ENCODE measurements at regions of chr12 and their contacts with region 1.

Region 1: GRCh38 chr12:108562348-108563135 is at the start of gene ISCU:
- DNase-seq: peak; percentile 98
- H3K4me3 ChIP-seq: peak within 1 kb of the TSS; percentile 82 to 93 (median 84)
- H3K27ac ChIP-seq: peak within 1 kb of the TSS; percentile 93 to 95 (median 95)
- H3K4me1 ChIP-seq: peaks cover 59 to 80% (median 74%) of the 10 kb centered on the region in 4 donors
- H3K27me3 ChIP-seq: no peaks in the 10 kb centered on the region
- CTCF ChIP-seq: peak in 1 of 3 experiments; percentile 6
- EP300 ChIP-seq: no peak
- POLR2A ChIP-seq: peak; percentile 92
- total RNA-seq, gene ISCU: 207 to 257 (median 242) TPM

Region 2: GRCh38 chr12:108618079-108618952 is 55.8 kb after region 1 on chr12:
- intact Hi-C with region 1: loop called (anchors 1 kb)
- DNase-seq: no peak
- H3K4me3 ChIP-seq: no peak overlapping the region
- H3K27ac ChIP-seq: no peak overlapping the region
- H3K4me1 ChIP-seq: peaks cover 11 to 27% (median 14%) of the 10 kb centered on the region in 4 donors
- H3K27me3 ChIP-seq: no peaks in the 10 kb centered on the region
- CTCF ChIP-seq: peak; percentile 87 to 99 (median 95)
- EP300 ChIP-seq: no peak
- POLR2A ChIP-seq: no peak

Region 3: GRCh38 chr12:108803428-108804105 is 241.0 kb after region 1 on chr12:
- intact Hi-C with region 1: loop called (anchors 2 kb)
- DNase-seq: peak; percentile 96
- H3K4me3 ChIP-seq: peak overlapping the region in 1 of 4 donors; percentile 39
- H3K27ac ChIP-seq: peak overlapping the region; percentile 90 to 95 (median 94)
- H3K4me1 ChIP-seq: peaks cover 69 to 87% (median 83%) of the 10 kb centered on the region in 4 donors
- H3K27me3 ChIP-seq: no peaks in the 10 kb centered on the region
- CTCF ChIP-seq: peak; percentile 96 to 99 (median 98)
- EP300 ChIP-seq: no peak
- POLR2A ChIP-seq: no peak

Region 4: GRCh38 chr12:108850854-108851573 is 288.5 kb after region 1 on chr12:
- intact Hi-C with region 1: loop called (anchors 5 kb)
- DNase-seq: no peak
- H3K4me3 ChIP-seq: no peak overlapping the region
- H3K27ac ChIP-seq: peak overlapping the region; percentile 5 to 96 (median 91)
- H3K4me1 ChIP-seq: peaks cover 88 to 93% (median 90%) of the 10 kb centered on the region in 4 donors
- H3K27me3 ChIP-seq: no peaks in the 10 kb centered on the region
- CTCF ChIP-seq: no peak
- EP300 ChIP-seq: no peak
- POLR2A ChIP-seq: no peak

Region 5: GRCh38 chr12:108950991-108951739 is 388.6 kb after region 1 on chr12:
- intact Hi-C with region 1: loop called (anchors 2 kb)
- DNase-seq: peak; percentile 97
- H3K4me3 ChIP-seq: peak overlapping the region in 3 of 4 donors; percentile 6 to 38 (median 26)
- H3K27ac ChIP-seq: no peak overlapping the region
- H3K4me1 ChIP-seq: peaks cover 8 to 14% (median 9%) of the 10 kb centered on the region in 4 donors
- H3K27me3 ChIP-seq: peaks cover 0 to 6% (median 0%) of the 10 kb centered on the region in 4 donors
- CTCF ChIP-seq: peak; percentile 85 to 90 (median 89)
- EP300 ChIP-seq: no peak
- POLR2A ChIP-seq: no peak

Region 6: DNA sequence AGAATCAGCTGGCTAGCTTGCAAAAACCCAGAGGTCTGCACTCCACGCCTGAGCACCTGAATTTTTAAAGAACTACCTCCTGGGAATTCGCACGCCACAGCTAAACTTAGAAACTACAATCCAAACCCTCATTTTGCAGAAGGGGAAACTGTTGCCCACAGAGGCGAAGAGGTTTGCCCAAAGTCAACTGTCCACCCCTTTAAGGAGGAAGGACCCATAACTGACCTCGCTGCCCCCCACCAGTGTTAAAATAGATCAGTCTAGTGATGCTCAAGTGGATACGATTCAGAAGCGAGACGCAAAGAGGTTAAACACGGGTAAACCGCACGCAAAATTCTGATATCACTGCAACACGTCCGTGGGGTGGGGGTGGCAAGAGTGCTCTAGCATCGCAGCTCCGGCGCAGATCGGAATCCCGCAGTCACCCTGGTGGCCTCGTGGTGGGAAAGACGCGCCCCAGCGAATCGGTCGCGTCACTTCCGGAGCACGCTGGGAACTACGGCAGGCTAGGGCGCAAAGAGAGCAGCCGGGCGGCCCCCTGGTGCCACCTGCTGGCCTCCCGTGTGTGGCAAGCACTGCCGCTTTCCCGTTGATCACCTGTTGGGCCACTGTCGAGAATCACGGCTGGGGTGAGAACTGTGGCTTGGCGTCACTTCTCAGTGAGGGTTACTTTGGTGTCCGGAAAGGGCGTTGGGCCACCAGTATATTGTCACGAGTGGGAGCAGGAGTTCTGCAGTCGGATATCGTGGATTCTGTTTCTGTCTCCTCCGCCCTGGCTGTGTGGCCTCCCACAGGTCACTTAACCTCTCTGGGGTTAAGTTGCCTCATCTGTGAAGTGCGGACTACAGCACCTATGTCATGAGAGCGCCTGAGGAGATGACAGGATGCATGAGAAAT is 530.7 kb after region 1 on chr12 and contains the start of gene ALKBH2:
- intact Hi-C with region 1: loop called (anchors 5 kb)
- DNase-seq: peak; percentile 98
- H3K4me3 ChIP-seq: peak within 1 kb of the TSS; percentile 56 to 72 (median 61)
- H3K27ac ChIP-seq: peak within 1 kb of the TSS; percentile 78 to 83 (median 80)
- H3K4me1 ChIP-seq: peaks cover 27 to 45% (median 38%) of the 10 kb centered on the region in 4 donors
- H3K27me3 ChIP-seq: peaks cover 0 to 3% (median 0%) of the 10 kb centered on the region in 4 donors
- CTCF ChIP-seq: peak; percentile 98 to 99 (median 99)
- EP300 ChIP-seq: peak; percentile 92
- POLR2A ChIP-seq: peak; percentile 36
- total RNA-seq, gene ALKBH2: 10.4 to 19.0 (median 13.6) TPM

Measured in esophagus muscularis mucosa (tissue), 4 donors.